ENCODE measurements at regions of chr2 and their contacts with region 1.

Region 1: GRCh38 chr2:127486247-127487058 is 39.8 kb downstream of the IWS1 start:
- DNase-seq: no peak
- H3K4me3 ChIP-seq: no peak overlapping the region
- H3K27ac ChIP-seq: no peak overlapping the region
- H3K4me1 ChIP-seq: no peaks in the 10 kb centered on the region
- H3K27me3 ChIP-seq: no peaks in the 10 kb centered on the region
- CTCF ChIP-seq: no peak
- EP300 ChIP-seq: no peak
- POLR2A ChIP-seq: no peak

Region 2: GRCh38 chr2:127197475-127198385 is 288.7 kb before region 1 on chr2:
- intact Hi-C with region 1: loop called (anchors 10 kb)
- DNase-seq: no peak
- H3K4me3 ChIP-seq: no peak overlapping the region
- H3K27ac ChIP-seq: no peak overlapping the region
- H3K4me1 ChIP-seq: peaks cover 0 to 13% (median 9%) of the 10 kb centered on the region in 4 donors
- H3K27me3 ChIP-seq: no peaks in the 10 kb centered on the region
- CTCF ChIP-seq: peak; percentile 10 to 47 (median 30)
- EP300 ChIP-seq: no peak
- POLR2A ChIP-seq: no peak

Region 3: DNA sequence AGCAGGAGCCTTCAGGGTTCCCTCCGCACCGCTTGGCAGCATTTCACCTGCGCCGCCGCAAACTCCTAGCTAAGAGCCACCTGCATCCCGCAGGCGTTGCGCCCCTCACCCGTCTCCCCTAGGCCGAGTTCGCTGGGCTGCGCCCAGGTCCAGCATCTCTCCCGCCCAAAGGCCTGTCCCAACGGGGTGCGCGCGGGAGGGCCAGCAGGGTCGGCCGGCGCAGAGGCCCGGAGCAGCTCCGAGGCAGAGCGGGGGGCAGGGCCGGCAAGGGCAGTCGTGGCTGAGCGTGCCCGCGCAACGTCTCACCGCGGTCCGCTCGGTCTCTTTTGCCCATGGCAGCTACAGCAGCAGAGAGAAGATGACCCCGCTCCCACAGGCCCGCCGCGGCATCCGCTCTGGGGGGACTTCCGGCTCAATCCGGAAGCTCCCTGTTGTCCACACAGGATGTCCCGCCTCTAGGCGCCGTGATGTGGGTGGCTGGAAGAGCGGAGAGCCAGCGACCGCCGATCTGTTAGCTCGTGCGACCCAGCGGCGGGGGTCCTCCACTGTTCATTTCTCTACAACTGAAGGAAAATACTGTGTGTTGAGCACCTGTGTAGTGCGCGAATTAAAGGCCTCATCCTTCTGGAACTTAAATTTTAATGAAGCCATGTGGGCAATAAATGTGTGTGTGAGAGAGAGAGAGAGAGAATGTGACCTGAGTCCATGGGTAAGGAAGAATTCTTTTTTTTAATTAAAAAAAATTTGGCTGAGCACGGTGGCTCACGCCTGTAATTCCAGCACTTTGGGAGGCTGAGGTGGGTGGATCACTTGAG is 192.5 kb before region 1 on chr2 and contains the start of gene ERCC3:
- intact Hi-C with region 1: loop called (anchors 10 kb)
- DNase-seq: peak; percentile 90
- H3K4me3 ChIP-seq: peak within 1 kb of the TSS; percentile 72 to 97 (median 90)
- H3K27ac ChIP-seq: peak within 1 kb of the TSS; percentile 74 to 86 (median 82)
- H3K4me1 ChIP-seq: peaks cover 0 to 19% (median 13%) of the 10 kb centered on the region in 4 donors
- H3K27me3 ChIP-seq: no peaks in the 10 kb centered on the region
- CTCF ChIP-seq: no peak
- EP300 ChIP-seq: no peak
- POLR2A ChIP-seq: peak; percentile 22 to 34
- total RNA-seq, gene ERCC3: 31.7 to 44.8 (median 39.1) TPM

Region 4: GRCh38 chr2:127531221-127531648 is 44.8 kb after region 1 on chr2:
- intact Hi-C with region 1: no loop called
- DNase-seq: no peak
- H3K4me3 ChIP-seq: no peak overlapping the region
- H3K27ac ChIP-seq: no peak overlapping the region
- H3K4me1 ChIP-seq: peaks cover 0 to 8% (median 3%) of the 10 kb centered on the region in 4 donors
- H3K27me3 ChIP-seq: peaks cover 0 to 8% (median 0%) of the 10 kb centered on the region in 3 donors
- CTCF ChIP-seq: no peak
- EP300 ChIP-seq: no peak
- POLR2A ChIP-seq: no peak

Measured in sigmoid colon (tissue), 7 donors.